BJ (cell line): ENCODE measurements at regions of chr2 and their contacts with region 1.

Region 1: GRCh38 chr2:73156539-73157124 is 43.9 kb upstream of the RAB11FIP5 start:
- DNase-seq: no peak
- H3K4me3 ChIP-seq: no peak overlapping the region
- H3K27me3 ChIP-seq: peaks cover 6% of the 10 kb centered on the region
- CTCF ChIP-seq: peak; percentile 94

Region 2: DNA sequence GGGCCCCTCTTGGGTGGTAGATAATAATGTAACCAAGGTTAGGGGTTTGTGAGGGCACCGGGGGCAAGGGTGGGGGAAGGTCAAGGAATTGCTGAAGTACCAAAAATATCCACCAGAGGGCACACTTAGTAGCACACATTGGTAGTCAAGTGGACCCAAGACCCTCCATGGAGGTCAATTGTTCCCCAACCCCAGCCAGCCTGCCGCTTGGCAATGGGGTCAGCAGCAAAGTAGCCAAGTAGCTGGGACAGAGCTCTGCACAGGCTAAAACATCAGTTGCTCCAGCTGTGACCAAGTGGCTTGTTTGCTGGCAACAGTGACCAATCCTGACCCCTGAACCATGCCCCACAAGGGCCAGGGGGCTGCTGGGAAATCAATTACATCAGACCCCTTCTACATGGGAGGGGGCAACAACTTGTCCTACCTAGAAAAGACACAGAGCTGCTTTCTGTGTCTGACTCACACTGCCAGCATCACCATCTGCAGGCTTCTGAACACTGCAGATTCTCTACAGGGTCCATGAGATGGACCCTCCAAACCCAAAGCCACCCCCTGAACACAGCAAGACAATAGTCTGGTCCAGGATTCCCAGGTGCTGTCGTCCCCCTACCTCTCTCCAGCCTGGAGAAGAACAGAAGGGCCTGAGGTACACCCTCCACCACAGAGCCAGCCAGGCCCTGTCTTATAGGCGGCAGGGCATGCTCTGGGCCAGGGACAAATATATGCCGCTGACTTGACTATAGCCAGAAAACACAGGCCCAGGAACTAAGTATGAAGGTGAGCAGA is 163.3 kb before region 1 on chr2:
- CTCF ChIA-PET with region 1: interaction called, 61 read pairs
- POLR2A ChIA-PET with region 1: no interaction called
- DNase-seq: no peak
- H3K4me3 ChIP-seq: no peak overlapping the region
- H3K27me3 ChIP-seq: no peaks in the 10 kb centered on the region
- CTCF ChIP-seq: peak; percentile 71

Region 3: DNA sequence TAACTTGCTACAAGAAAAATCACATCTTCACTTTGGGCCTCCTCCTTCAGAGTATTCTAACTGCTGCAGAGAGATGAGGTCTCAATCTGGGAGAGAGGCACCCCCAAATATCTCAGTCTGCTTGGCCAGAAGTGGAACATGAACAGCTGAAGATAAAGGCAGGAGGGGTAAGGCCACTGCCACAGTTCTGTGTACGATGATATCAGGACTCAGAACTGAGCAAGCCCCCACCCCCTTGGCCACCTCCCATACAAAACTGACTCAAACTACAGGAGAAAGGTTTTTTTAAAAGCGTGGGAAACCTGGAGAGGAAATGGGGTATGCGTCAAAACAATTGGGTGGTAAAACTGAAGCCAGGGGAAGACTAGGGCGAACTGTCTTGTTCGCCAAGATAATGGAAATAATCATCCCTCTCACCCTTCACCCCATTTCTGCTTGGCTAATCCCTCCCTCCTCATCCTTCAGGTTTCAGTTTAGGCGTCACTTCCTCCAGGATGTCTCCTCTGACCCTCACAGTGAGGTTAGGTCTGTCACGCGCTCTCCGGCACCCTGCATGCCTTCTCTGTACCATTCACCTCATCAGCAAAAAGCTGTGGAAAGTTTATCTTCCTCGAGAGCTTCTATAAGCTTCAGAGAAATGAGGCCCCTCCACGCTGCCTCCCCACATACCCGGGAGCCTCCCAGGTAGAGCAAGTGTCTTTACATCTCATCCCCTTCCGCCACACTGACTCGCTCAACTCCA is 149.5 kb before region 1 on chr2:
- CTCF ChIA-PET with region 1: interaction called, 10 read pairs
- POLR2A ChIA-PET with region 1: no interaction called
- DNase-seq: no peak
- H3K4me3 ChIP-seq: no peak overlapping the region
- H3K27me3 ChIP-seq: no peaks in the 10 kb centered on the region
- CTCF ChIP-seq: no peak

Region 4: DNA sequence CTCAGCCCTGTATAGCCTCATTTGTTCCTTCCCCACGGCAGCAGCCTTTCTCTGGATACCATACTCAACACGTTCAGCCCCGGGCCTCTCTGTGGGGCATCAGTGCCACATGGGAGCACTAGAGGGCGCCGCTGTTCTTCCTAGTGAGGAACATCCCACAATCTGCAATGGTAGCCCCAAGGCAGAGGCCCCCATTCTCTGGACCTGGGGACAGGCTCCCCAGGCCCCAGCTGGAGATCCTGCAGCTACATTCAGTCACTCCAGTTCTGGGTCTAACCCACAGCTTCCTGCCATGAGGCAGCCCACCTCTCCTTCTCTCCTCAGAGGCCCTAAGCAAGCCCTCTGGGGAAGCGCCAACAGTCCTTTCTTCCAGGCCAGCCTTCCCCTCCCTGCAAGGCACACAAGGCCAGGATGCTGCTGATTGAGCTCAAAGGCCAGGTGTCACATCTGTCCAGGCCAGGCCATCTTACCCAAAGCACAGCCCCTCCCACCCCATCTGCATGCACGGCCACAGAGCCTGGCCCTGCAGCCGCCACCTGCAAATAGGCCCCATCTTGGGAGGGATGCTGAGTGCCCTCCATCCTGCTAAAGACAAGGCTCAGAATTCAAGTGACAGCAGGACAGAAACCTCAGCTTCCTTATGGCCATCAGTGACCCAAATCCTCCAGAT is 70.8 kb before region 1 on chr2:
- CTCF ChIA-PET with region 1: interaction called, 326 read pairs
- POLR2A ChIA-PET with region 1: no interaction called
- DNase-seq: no peak
- H3K4me3 ChIP-seq: no peak overlapping the region
- H3K27me3 ChIP-seq: no peaks in the 10 kb centered on the region
- CTCF ChIP-seq: peak; percentile 98

Region 5: GRCh38 chr2:73112913-73113633 is 43.6 kb before region 1 on chr2 and contains the start of gene RAB11FIP5:
- CTCF ChIA-PET with region 1: interaction called, 15 read pairs
- POLR2A ChIA-PET with region 1: no interaction called
- DNase-seq: no peak
- H3K4me3 ChIP-seq: peak within 1 kb of the TSS; percentile 69
- H3K27me3 ChIP-seq: no peaks in the 10 kb centered on the region
- CTCF ChIP-seq: peak; percentile 5; the same call in 1 of the 2 replicates
- polyA plus RNA-seq, gene RAB11FIP5: 42.5 and 52.0 TPM in 2 replicates

Region 6: GRCh38 chr2:73575261-73575660 is 418.6 kb after region 1 on chr2:
- CTCF ChIA-PET with region 1: no interaction called
- POLR2A ChIA-PET with region 1: no interaction called
- DNase-seq: no peak
- H3K4me3 ChIP-seq: no peak overlapping the region
- H3K27me3 ChIP-seq: no peaks in the 10 kb centered on the region
- CTCF ChIP-seq: no peak